Dorsolateral prefrontal cortex (tissue), 120 donors: ENCODE measurements at regions of chr11 and their contacts with region 1.

Region 1: DNA sequence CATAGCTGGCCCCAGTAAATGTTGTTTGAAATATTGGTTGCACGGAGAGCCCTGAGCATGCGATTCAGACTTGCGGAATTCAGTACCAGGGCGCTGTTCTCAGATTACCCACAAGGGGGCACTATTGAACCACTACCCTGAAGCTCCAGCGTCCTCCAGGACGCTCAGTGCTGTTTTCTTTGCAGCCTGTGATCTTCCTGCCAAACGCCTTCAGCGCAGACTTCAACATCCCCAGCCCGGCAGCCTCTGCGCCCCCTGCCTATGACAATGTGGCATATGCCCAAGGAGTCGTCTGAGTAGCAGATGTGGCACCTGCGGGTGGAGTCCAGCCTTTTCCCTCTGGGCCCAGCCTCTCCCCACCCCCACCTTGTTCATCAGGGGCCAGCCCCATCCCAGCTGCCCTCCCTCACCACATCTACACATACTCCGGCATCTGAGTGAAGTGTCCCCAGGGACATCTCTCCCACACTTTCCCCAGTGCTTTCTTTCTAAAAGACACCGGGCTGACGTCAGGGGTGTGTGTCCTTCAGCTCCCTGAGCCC is 9.6 kb upstream of the MS4A10 start:
- DNase-seq: peak; percentile 43 to 90 (median 82)
- H3K4me3 ChIP-seq: peak overlapping the region in 13 of 59 donors; percentile 0 to 28 (median 24)
- H3K27ac ChIP-seq: peak overlapping the region in 14 of 59 donors; percentile 24 to 72 (median 47)
- H3K27me3 ChIP-seq: peaks cover 0 to 3% (median 0%) of the 10 kb centered on the region in 45 donors
- CTCF ChIP-seq: peak; percentile 75 to 98 (median 92)

Region 2: GRCh38 chr11:59866397-59866796 is 909.1 kb before region 1 on chr11 and contains the start of gene TCN1:
- intact Hi-C with region 1: no loop called
- DNase-seq: no peak
- H3K4me3 ChIP-seq: no peak within 1 kb of the TSS
- H3K27ac ChIP-seq: no peak within 1 kb of the TSS
- H3K27me3 ChIP-seq: no peaks in the 10 kb centered on the region
- CTCF ChIP-seq: no peak
- total RNA-seq, gene TCN1: 0.75 to 1.3 (median 1.2) TPM in 3 of 120 experiments, not detected in the others

Region 3: GRCh38 chr11:60750926-60751325 is 24.6 kb before region 1 on chr11:
- intact Hi-C with region 1: loop called in 1 of 2 experiments (anchors 2 kb)
- DNase-seq: no peak
- H3K4me3 ChIP-seq: no peak overlapping the region
- H3K27ac ChIP-seq: no peak overlapping the region
- H3K27me3 ChIP-seq: peaks cover 0 to 35% (median 0%) of the 10 kb centered on the region in 45 donors
- CTCF ChIP-seq: no peak

Region 4: DNA sequence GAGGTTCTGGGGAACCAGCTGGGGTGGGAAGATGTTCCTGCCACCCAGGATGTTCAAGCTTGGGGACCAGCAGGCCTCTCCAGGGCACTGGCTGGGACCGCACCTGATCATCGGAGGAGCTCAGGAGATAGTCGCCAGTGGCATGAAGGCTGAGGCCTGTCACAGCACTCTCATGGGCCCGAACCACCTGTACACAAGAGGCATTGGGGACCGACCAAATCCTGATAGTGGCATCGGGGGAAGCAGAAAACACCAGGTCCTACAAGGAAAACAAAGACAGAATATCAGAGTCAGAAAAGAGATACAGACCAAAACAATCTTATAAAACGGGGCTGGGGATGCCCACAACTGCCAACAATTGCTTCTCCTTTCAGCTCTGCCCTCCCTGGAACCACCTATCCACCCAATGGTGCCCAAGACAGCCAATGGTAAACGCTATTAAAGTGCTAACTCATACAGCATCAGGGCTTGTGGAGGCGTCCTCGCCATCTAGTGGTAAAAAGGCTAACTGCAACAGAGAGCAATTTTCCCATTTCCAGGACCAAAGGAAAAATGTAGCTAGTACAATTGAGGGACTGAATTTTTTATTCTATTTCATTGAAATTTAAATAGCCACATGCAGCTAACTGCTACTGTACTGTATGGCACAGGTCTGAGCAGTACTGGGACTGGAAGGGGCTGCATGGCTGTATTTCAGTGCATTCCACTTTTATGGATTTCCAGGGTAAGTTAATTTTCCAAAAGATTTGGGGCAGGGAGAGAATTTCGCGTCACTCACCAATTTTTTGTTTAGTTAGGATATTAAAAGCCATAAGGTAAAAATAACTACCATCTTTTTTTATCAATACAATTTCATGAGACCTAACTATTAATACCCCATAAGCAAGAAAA is 123.8 kb after region 1 on chr11:
- intact Hi-C with region 1: loop called in 1 of 2 experiments (anchors 5 kb)
- DNase-seq: peak in 1 of 10 donors; percentile 52
- H3K4me3 ChIP-seq: no peak overlapping the region
- H3K27ac ChIP-seq: peak overlapping the region in 5 of 59 donors; percentile 14 to 44 (median 29)
- H3K27me3 ChIP-seq: no peaks in the 10 kb centered on the region
- CTCF ChIP-seq: peak; percentile 80 to 99 (median 93)

Region 5: DNA sequence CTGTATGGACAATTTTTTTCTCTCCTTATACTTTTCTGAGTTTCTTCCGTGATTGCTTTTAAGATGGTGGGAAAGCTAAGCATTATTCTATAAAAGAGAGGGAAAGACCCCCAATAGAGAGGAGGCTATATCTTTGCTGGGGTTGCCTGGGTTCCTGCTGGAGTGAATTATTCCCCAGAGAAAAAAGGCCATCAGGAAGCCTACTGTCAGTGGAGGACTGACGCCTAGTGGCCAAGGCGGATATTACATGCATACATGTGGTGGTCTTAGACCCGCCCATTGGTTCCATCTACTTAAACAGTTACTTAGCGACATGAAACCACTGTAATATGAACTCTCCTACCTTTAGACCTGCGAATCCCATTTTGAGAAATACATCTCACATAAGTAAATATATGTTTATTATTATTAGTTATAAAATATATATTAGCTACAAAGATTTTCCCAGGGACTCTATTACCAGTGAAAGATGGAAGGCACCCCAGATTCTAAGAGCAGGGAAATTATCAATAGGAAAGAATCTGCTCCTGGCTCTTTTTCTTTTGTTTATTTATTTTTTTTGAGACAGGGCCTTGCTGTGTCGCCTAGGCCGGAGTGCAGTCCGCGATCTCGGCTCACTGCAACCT is 412.1 kb after region 1 on chr11:
- intact Hi-C with region 1: loop called in 1 of 2 experiments (anchors 5 kb)
- DNase-seq: peak in 9 of 10 donors; percentile 53 to 82 (median 65)
- H3K4me3 ChIP-seq: no peak overlapping the region
- H3K27ac ChIP-seq: no peak overlapping the region
- H3K27me3 ChIP-seq: peaks cover 0 to 4% (median 0%) of the 10 kb centered on the region in 45 donors
- CTCF ChIP-seq: peak; percentile 82 to 98 (median 93)